ENCODE measurements at regions of chr16 and their contacts with region 1.

Region 1: GRCh38 chr16:61042737-61043136 is 993.5 kb downstream of the CDH8 start:
- DNase-seq: no peak
- H3K4me3 Mint-ChIP-seq: no peak overlapping the region
- H3K27ac Mint-ChIP-seq: no peak overlapping the region
- H3K4me1 Mint-ChIP-seq: no peaks in the 10 kb centered on the region
- H3K27me3 Mint-ChIP-seq: peaks cover 47% of the 10 kb centered on the region
- CTCF ChIP-seq: no peak

Region 2: DNA sequence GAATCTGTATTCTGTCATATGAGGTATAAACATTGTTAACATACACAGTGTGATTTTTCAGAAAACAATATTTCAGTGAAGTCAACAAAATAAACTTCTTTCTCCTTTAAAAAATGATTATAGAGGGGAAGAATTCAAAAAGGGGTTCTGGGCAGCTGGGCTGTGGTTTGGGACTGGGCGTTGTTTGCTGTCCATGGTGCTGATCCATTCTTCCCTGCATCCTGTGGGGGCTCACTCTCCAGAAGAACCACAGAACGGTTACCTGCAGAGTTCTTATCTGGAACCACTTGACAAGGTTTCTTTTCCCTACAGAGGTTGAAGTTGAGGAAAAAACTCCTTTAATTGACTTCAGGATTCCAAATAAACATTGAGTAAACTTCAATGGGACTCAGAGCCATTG is 97.5 kb before region 1 on chr16:
- CTCF ChIA-PET with region 1: no interaction called
- POLR2A ChIA-PET with region 1: no interaction called
- intact Hi-C with region 1: loop called (anchors 10 kb)
- DNase-seq: no peak
- H3K4me3 Mint-ChIP-seq: no peak overlapping the region
- H3K27ac Mint-ChIP-seq: no peak overlapping the region
- H3K4me1 Mint-ChIP-seq: no peaks in the 10 kb centered on the region
- H3K27me3 Mint-ChIP-seq: peaks cover 9% of the 10 kb centered on the region
- CTCF ChIP-seq: no peak

Region 3: DNA sequence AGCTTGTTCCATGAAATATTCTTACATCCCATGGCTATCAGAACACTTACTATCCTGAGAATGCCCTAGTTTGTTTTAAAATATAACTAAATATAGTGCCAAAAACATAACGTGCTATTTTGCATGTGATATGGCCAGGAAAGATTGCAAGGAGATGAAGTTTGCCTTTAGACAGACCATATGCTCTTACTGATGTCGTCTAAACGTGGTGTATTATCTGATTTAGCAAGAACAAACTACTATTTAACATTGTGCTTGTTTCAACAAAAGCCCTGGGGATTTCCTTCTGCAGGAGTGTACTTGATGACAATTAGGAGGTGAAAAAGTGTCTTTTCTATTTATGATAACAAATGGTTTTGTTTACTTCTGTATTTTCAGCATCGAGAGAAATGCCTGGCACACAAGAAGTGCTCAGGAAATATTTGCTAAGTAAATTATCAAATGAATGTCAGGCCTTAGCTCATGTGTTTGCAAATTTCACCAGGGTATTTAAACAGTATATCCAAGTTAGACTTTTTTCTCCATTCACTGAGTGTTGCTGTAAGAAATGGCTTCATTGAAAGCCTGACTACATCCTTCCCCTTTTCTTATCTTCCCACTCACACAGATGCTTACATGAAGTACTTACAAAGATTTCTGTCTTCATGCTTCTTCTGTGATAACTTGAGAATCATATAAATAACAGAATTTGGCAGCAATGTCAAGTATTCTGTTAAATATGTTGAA is 40.1 kb before region 1 on chr16:
- CTCF ChIA-PET with region 1: no interaction called
- POLR2A ChIA-PET with region 1: no interaction called
- intact Hi-C with region 1: no loop called
- DNase-seq: no peak
- H3K4me3 Mint-ChIP-seq: no peak overlapping the region
- H3K27ac Mint-ChIP-seq: no peak overlapping the region
- H3K4me1 Mint-ChIP-seq: no peaks in the 10 kb centered on the region
- H3K27me3 Mint-ChIP-seq: peaks cover 88% of the 10 kb centered on the region
- CTCF ChIP-seq: no peak

Region 4: DNA sequence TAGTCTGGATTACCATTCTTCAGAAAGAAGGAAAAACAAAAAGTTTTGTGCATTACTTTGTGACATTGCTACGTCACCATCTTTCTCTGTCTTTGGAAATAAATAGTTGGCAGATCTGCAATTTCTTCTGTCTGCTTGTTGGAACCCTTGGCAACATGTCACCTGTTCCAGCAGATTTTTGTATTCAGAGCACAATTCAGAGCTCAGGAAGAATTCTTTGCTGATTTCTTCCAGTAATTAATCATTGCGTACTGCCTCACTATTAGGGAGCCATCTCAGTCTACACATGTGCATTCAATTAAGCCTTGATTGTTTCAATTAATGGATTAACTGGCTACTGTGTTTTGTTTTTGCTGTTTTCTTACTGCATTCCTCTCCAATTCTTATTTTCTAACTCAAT is 526.3 kb after region 1 on chr16:
- CTCF ChIA-PET with region 1: no interaction called
- POLR2A ChIA-PET with region 1: no interaction called
- intact Hi-C with region 1: no loop called
- DNase-seq: no peak
- H3K4me3 Mint-ChIP-seq: no peak overlapping the region
- H3K27ac Mint-ChIP-seq: no peak overlapping the region
- H3K4me1 Mint-ChIP-seq: no peaks in the 10 kb centered on the region
- H3K27me3 Mint-ChIP-seq: peaks cover 39% of the 10 kb centered on the region
- CTCF ChIP-seq: no peak

Measured in MCF 10A (cell line).